ENCODE measurements at regions of chr18 and their contacts with region 1.

Region 1: GRCh38 chr18:8982416-8983184 is 119.9 kb upstream of the NDUFV2 start:
- DNase-seq: no peak
- H3K4me3 ChIP-seq: no peak overlapping the region
- H3K27ac ChIP-seq: no peak overlapping the region
- H3K4me1 ChIP-seq: peaks cover under 1 to 11% (median 10%) of the 10 kb centered on the region in 4 experiments
- H3K27me3 ChIP-seq: no peaks in the 10 kb centered on the region
- CTCF ChIP-seq: peak; percentile 43 to 68 (median 63)
- EP300 ChIP-seq: no peak
- POLR2A ChIP-seq: no peak
- RAD21 ChIP-seq: peak; percentile 83 to 90

Region 2: DNA sequence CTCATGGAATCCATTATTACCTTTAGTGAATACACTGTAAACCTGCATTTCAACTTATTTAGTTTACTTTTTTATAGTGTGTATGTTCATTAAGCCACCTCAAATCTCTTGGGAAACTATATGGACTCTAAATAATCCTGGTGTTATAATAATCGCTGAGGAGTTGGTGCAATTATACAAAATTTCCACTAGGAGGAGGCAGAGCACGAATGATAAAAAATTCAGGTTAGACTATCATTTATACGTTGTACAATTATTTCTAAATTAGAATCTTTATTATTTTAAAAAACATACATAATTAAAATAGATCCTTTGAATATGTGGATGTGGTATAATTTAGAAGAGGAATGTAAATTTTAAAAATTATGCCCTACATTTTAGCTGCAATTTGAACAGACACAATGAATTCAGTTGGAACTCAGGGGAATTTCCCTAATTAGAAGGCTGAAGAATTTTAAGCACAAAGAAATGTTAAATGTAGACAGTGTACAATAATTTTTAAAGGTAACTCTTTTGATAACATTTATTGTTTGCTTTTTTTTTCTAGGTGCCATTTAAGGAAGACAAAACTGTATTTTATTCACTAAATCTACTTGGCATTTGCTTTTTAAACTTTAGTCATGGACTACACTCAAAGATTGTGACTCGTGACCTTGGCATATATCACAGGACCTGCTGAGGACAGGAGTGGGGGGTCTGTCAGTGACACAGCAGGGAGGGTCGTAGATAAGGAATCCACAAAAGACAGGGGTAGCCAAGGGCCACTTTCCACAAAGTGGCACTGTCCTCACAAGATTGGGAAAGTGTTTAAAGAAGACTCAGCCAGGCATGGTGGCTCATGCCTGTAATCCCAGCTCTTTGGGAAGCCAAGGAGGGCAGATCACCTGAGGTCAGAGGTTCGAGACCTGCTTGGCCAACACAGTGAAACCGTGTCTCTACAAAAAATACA is 327.8 kb before region 1 on chr18:
- CTCF ChIA-PET with region 1: interaction called, 40 read pairs
- POLR2A ChIA-PET with region 1: no interaction called
- DNase-seq: no peak
- H3K4me3 ChIP-seq: no peak overlapping the region
- H3K27ac ChIP-seq: no peak overlapping the region
- H3K4me1 ChIP-seq: peaks cover 0 to 2% (median 0%) of the 10 kb centered on the region in 4 experiments; a peak in 3 of 7 replicates
- H3K27me3 ChIP-seq: no peaks in the 10 kb centered on the region
- CTCF ChIP-seq: peak in 2 of 3 experiments; percentile 23 to 42; a peak in 2 of 4 replicates
- EP300 ChIP-seq: no peak
- POLR2A ChIP-seq: no peak
- RAD21 ChIP-seq: peak; percentile 65 to 72

Region 3: DNA sequence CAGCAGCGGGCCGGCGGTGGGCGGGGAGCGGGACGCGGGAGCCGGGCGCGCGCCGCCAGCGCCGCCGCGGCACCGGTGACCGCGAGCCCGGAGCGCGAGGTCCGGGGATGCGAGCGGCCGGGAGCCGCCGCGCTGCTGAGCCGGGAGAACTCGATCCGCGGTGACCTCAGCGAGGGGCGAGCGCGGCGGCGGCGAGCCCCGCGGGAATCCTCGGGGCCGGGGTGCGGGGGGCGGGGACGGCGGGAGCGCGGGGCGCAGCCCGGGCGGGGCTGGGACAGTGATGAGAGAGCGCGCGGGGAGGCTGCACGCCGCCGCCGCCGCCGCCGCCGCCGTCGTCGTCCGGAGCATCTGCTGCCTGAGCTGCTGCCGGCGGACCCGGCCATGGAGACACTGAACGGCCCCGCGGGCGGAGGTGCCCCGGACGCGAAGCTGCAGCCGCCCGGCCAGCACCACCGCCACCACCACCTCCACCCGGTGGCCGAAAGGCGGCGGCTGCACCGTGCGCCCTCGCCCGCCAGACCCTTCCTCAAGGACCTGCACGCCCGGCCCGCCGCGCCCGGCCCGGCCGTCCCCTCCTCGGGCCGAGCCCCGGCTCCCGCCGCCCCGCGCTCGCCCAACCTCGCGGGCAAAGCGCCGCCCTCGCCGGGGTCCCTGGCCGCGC is 277.2 kb before region 1 on chr18 and contains the start of gene MTCL1:
- CTCF ChIA-PET with region 1: interaction called, 26 read pairs
- POLR2A ChIA-PET with region 1: interaction called, 4 read pairs
- DNase-seq: peak in 1 of 2 experiments; percentile 70
- H3K4me3 ChIP-seq: peak within 1 kb of the TSS; percentile 59 to 72 (median 70)
- H3K27ac ChIP-seq: no peak within 1 kb of the TSS
- H3K4me1 ChIP-seq: peaks cover 13 to 23% (median 19%) of the 10 kb centered on the region in 4 experiments
- H3K27me3 ChIP-seq: peaks cover 0 to 7% (median 5%) of the 10 kb centered on the region in 4 experiments; a peak in 5 of 7 replicates
- CTCF ChIP-seq: no peak
- EP300 ChIP-seq: no peak
- POLR2A ChIP-seq: no peak
- RAD21 ChIP-seq: no peak
- total RNA-seq, gene MTCL1: 60.8 and 62.0 TPM in 2 replicates

Region 4: GRCh38 chr18:8830067-8831060 is 152.2 kb before region 1 on chr18:
- CTCF ChIA-PET with region 1: interaction called, 11 read pairs
- POLR2A ChIA-PET with region 1: no interaction called
- DNase-seq: no peak
- H3K4me3 ChIP-seq: no peak overlapping the region
- H3K27ac ChIP-seq: no peak overlapping the region; the same call in 1 of the 2 replicates
- H3K4me1 ChIP-seq: peaks cover 0 to 2% (median 0%) of the 10 kb centered on the region in 4 experiments; a peak in 1 of 7 replicates
- H3K27me3 ChIP-seq: no peaks in the 10 kb centered on the region; a peak in 1 of 7 replicates
- CTCF ChIP-seq: no peak
- EP300 ChIP-seq: no peak
- POLR2A ChIP-seq: no peak; a peak in 1 of 3 replicates
- RAD21 ChIP-seq: no peak

Region 5: GRCh38 chr18:8895987-8896619 is 86.5 kb before region 1 on chr18:
- CTCF ChIA-PET with region 1: interaction called, 14 read pairs
- POLR2A ChIA-PET with region 1: interaction called, 4 read pairs
- DNase-seq: no peak
- H3K4me3 ChIP-seq: no peak overlapping the region
- H3K27ac ChIP-seq: no peak overlapping the region
- H3K4me1 ChIP-seq: peaks cover 0 to 2% (median 0%) of the 10 kb centered on the region in 4 experiments; a peak in 2 of 7 replicates
- H3K27me3 ChIP-seq: no peaks in the 10 kb centered on the region
- CTCF ChIP-seq: no peak
- EP300 ChIP-seq: no peak
- POLR2A ChIP-seq: no peak
- RAD21 ChIP-seq: no peak

Region 6: GRCh38 chr18:9047545-9048114 is 65.0 kb after region 1 on chr18:
- CTCF ChIA-PET with region 1: no interaction called
- POLR2A ChIA-PET with region 1: no interaction called
- DNase-seq: no peak
- H3K4me3 ChIP-seq: no peak overlapping the region
- H3K27ac ChIP-seq: no peak overlapping the region
- H3K4me1 ChIP-seq: no peaks in the 10 kb centered on the region
- H3K27me3 ChIP-seq: no peaks in the 10 kb centered on the region
- CTCF ChIP-seq: no peak
- EP300 ChIP-seq: no peak
- POLR2A ChIP-seq: no peak
- RAD21 ChIP-seq: no peak